Naive thymus-derived CD4-positive, alpha-beta T cell (primary cell): ENCODE measurements at regions of chr17 and their contacts with region 1.

Region 1: DNA sequence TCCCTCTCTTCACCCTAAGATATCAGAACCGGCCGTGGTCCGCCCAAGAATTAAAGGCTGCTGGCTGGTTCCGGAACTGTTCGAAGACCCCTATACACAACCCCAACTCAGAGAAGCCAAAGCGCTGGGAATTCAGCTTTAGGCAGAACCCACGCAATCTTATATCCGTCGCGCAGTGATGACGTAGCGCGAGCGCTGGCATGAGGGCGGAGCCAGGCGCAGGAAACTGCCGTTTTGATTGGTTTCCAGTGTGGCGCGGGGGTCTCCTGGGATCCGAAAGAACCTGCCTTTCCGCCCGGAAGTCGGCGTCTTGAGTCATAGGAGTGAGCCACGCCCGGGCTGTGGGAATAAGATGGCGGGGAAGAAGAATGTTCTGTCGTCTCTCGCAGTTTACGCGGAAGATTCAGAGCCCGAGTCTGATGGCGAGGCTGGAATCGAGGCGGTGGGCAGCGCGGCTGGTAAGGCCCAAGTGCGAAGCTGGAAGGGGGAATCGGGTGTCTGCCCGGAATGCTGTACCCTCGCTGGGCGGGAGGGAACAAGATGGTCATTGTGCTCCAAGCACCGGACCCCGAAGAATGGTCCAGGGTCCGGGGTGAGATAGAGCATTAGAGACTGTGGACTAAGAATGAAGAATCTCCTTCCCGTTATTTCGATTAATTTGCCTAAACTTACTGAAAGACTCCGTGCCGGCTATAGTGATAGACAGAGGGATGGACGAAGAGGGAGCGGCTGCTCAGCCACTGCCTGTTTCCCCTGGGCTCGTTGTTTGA is at the starts of genes RECQL5 and SAP30BP:
- DNase-seq: peak; percentile 94 to 98 (median 96)
- ATAC-seq: peak; percentile 100
- H3K4me3 ChIP-seq: peak within 1 kb of the TSS; percentile 99
- H3K4me3 Mint-ChIP-seq: peak within 1 kb of the TSS in 6 of 10 donors; percentile 59 to 74 (median 64)
- H3K27ac ChIP-seq: peak within 1 kb of the TSS; percentile 96
- H3K27ac Mint-ChIP-seq: peak within 1 kb of the TSS in 5 of 9 donors; percentile 6 to 83 (median 60)
- H3K4me1 ChIP-seq: peaks cover 21 to 26% of the 10 kb centered on the region in 2 donors
- H3K4me1 Mint-ChIP-seq: peaks cover 11 to 34% (median 21%) of the 10 kb centered on the region in 7 donors
- H3K27me3 ChIP-seq: no peaks in the 10 kb centered on the region
- H3K27me3 Mint-ChIP-seq: no peaks in the 10 kb centered on the region
- total RNA-seq, gene RECQL5: 38.7 to 76.5 (median 49.2) TPM
- total RNA-seq, gene SAP30BP: 97.6 to 198 (median 116) TPM

Region 2: GRCh38 chr17:75456417-75457046 is 210.7 kb before region 1 on chr17 and contains the start of gene TMEM94:
- CTCF ChIA-PET with region 1: no interaction called
- POLR2A ChIA-PET with region 1: interaction called, 3 read pairs
- intact Hi-C with region 1: loop called in 1 of 2 experiments (anchors 1 kb)
- DNase-seq: peak; percentile 70 to 93 (median 89)
- ATAC-seq: peak; percentile 98
- H3K4me3 ChIP-seq: peak within 1 kb of the TSS; percentile 99
- H3K4me3 Mint-ChIP-seq: peak within 1 kb of the TSS; percentile 92 to 99 (median 94)
- H3K27ac ChIP-seq: peak within 1 kb of the TSS; percentile 74
- H3K27ac Mint-ChIP-seq: peak within 1 kb of the TSS; percentile 84 to 99 (median 93)
- H3K4me1 ChIP-seq: peaks cover 10% of the 10 kb centered on the region in 2 donors
- H3K4me1 Mint-ChIP-seq: peaks cover 25 to 42% (median 34%) of the 10 kb centered on the region in 7 donors
- H3K27me3 ChIP-seq: no peaks in the 10 kb centered on the region
- H3K27me3 Mint-ChIP-seq: no peaks in the 10 kb centered on the region
- total RNA-seq, gene TMEM94: 74.1 to 97.2 (median 81.9) TPM

Region 3: DNA sequence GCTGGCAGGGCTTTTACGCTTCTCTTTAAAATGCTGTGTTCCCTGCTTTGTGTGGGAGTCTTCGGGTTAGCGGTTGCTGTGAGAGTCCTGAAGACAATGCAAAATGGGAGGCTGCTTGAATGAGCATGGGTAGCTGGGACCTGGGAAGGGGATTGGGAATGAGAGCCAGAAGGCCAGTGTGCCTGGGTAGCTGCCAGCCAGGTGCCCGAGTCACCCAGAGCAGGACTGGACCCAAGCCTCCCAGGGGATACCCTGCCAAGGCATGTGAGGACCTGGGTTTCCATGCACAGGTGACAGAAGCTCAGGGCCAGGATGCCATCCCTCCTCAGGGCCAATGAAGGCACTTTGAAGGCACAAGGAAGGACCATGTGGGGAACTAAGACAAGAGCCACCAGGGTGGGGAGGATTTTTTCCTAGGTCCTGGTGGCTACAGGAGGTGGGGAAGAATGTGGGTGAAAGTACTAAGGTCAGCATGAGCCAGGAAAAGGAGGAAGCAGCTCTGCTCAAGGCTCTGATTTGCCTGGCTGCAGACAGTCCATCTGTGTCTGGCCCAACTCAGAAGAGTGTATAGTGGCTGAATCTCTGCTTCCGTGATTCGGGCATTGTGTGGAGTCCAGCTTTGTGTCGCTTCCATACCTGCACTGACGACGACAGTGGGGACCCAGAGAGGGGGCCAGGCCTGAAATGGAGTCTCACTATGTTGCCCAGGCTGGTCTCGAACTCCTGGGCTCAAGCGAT is 190.3 kb before region 1 on chr17:
- CTCF ChIA-PET with region 1: no interaction called
- POLR2A ChIA-PET with region 1: no interaction called
- intact Hi-C with region 1: no loop called
- DNase-seq: no peak
- ATAC-seq: no peak
- H3K4me3 ChIP-seq: no peak overlapping the region
- H3K4me3 Mint-ChIP-seq: no peak overlapping the region
- H3K27ac ChIP-seq: no peak overlapping the region
- H3K27ac Mint-ChIP-seq: peak overlapping the region in 3 of 9 donors; percentile 38 to 86 (median 71)
- H3K4me1 ChIP-seq: no peaks in the 10 kb centered on the region
- H3K4me1 Mint-ChIP-seq: peaks cover 0 to 12% (median 5%) of the 10 kb centered on the region in 7 donors
- H3K27me3 ChIP-seq: no peaks in the 10 kb centered on the region
- H3K27me3 Mint-ChIP-seq: no peaks in the 10 kb centered on the region

Region 4: GRCh38 chr17:75515496-75516254 is 151.5 kb before region 1 on chr17 and contains the start of gene CASKIN2:
- CTCF ChIA-PET with region 1: no interaction called
- POLR2A ChIA-PET with region 1: no interaction called
- intact Hi-C with region 1: loop called in 1 of 2 experiments (anchors 5 kb)
- DNase-seq: peak; percentile 57 to 88 (median 70)
- ATAC-seq: peak; percentile 80
- H3K4me3 ChIP-seq: peak within 1 kb of the TSS; percentile 97
- H3K4me3 Mint-ChIP-seq: peak within 1 kb of the TSS; percentile 69 to 85 (median 78)
- H3K27ac ChIP-seq: no peak within 1 kb of the TSS
- H3K27ac Mint-ChIP-seq: peak within 1 kb of the TSS in 4 of 9 donors; percentile 36 to 63 (median 47)
- H3K4me1 ChIP-seq: peaks cover 23 to 25% of the 10 kb centered on the region in 2 donors
- H3K4me1 Mint-ChIP-seq: peaks cover 18 to 28% (median 22%) of the 10 kb centered on the region in 7 donors
- H3K27me3 ChIP-seq: no peaks in the 10 kb centered on the region
- H3K27me3 Mint-ChIP-seq: peaks cover 0 to 14% (median 0%) of the 10 kb centered on the region in 5 donors
- total RNA-seq, gene CASKIN2: 0.22 to 1.2 (median 0.92) TPM

Region 5: DNA sequence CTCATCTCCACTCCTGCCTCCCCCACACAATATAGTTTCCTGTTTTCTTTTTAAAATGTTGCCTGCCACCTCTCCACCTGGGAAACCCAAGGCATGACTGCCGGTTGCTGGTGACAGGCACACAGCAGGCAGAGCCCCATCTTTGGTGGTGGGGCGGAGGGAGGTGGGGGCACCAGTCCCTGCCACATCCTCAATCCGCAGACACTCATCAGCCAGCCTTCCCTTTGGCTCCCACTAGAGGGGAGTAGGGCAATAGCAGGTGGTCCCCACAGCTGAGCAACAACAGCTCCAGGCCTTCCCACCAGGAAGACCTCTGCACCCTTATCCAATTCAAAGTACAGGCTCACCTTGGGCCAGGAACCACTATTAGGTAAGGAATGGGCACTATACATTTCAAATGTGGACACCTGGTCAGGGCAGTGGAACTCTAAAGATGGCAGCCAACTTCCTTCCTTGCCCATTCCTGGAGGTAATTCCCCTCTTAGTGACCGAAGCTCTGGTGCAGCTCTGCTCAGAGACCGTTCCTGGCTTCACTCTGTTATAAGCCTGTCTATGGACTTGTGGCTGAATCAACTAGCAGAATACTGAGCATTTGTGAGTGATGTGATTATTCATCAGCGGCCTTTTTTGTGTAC is 14.2 kb before region 1 on chr17:
- CTCF ChIA-PET with region 1: interaction called, 5 read pairs
- POLR2A ChIA-PET with region 1: interaction called, 16 read pairs
- intact Hi-C with region 1: no loop called
- DNase-seq: peak in 5 of 9 donors; percentile 20 to 30 (median 28)
- ATAC-seq: peak; percentile 85
- H3K4me3 ChIP-seq: no peak overlapping the region
- H3K4me3 Mint-ChIP-seq: no peak overlapping the region
- H3K27ac ChIP-seq: no peak overlapping the region
- H3K27ac Mint-ChIP-seq: peak overlapping the region in 2 of 9 donors; percentile 38 to 51
- H3K4me1 ChIP-seq: no peaks in the 10 kb centered on the region
- H3K4me1 Mint-ChIP-seq: peaks cover 0 to 11% (median 4%) of the 10 kb centered on the region in 7 donors
- H3K27me3 ChIP-seq: no peaks in the 10 kb centered on the region
- H3K27me3 Mint-ChIP-seq: no peaks in the 10 kb centered on the region

Region 6: GRCh38 chr17:75729351-75729750 is 62.1 kb after region 1 on chr17:
- CTCF ChIA-PET with region 1: no interaction called
- POLR2A ChIA-PET with region 1: no interaction called
- intact Hi-C with region 1: no loop called
- DNase-seq: no peak
- ATAC-seq: no peak
- H3K4me3 ChIP-seq: no peak overlapping the region
- H3K4me3 Mint-ChIP-seq: no peak overlapping the region
- H3K27ac ChIP-seq: no peak overlapping the region
- H3K27ac Mint-ChIP-seq: no peak overlapping the region
- H3K4me1 ChIP-seq: no peaks in the 10 kb centered on the region
- H3K4me1 Mint-ChIP-seq: peaks cover 0 to under 1% (median 0%) of the 10 kb centered on the region in 7 donors
- H3K27me3 ChIP-seq: no peaks in the 10 kb centered on the region
- H3K27me3 Mint-ChIP-seq: no peaks in the 10 kb centered on the region

Region 7: GRCh38 chr17:75877752-75878173 is 210.6 kb after region 1 on chr17:
- CTCF ChIA-PET with region 1: no interaction called
- POLR2A ChIA-PET with region 1: no interaction called
- intact Hi-C with region 1: no loop called
- DNase-seq: peak; percentile 56 to 77 (median 69)
- ATAC-seq: peak; percentile 89
- H3K4me3 ChIP-seq: peak overlapping the region; percentile 74
- H3K4me3 Mint-ChIP-seq: peak overlapping the region; percentile 83 to 99 (median 90)
- H3K27ac ChIP-seq: peak overlapping the region; percentile 70
- H3K27ac Mint-ChIP-seq: peak overlapping the region; percentile 67 to 97 (median 89)
- H3K4me1 ChIP-seq: peaks cover 25 to 30% of the 10 kb centered on the region in 2 donors
- H3K4me1 Mint-ChIP-seq: peaks cover 28 to 57% (median 50%) of the 10 kb centered on the region in 7 donors
- H3K27me3 ChIP-seq: no peaks in the 10 kb centered on the region
- H3K27me3 Mint-ChIP-seq: peaks cover 0 to 28% (median 0%) of the 10 kb centered on the region in 5 donors

Region 8: DNA sequence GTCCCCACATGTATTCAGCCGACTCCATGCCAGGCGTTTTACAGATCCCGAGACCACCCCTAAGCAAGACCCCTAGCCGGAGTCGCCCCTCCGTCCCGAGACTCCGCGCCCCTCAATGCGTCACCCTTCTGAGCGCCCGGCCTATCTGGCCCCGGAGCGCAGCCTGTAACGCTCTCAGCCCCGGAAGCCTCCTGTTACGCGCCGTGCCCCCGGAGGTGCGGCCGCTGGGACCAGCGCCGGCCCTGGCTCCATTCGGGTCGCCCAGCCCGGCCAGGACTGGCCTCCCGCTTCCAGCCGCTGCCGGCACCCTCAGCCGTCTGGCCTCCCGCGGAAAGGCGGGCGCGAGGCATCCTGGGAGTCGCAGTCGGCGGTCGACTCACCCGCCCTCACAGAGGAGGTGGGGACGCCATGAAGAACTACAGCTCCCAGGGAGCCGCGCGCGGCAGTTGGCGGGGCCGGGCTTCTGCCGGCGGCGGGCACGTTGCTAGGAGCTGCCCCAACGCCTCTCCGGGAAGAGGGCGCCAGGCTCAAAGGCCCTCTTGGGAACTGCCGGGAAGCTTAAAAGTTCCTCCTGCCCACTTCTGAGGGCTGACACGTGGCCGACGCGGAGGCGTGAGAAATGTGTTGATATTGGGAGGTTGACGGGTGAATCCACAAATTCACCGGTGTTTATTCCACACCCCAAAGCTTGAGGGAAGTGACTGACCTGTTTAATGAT is 273.7 kb after region 1 on chr17 and contains the start of gene FBF1:
- CTCF ChIA-PET with region 1: no interaction called
- POLR2A ChIA-PET with region 1: no interaction called
- intact Hi-C with region 1: loop called in 1 of 2 experiments (anchors 1 kb)
- DNase-seq: peak; percentile 74 to 92 (median 82)
- ATAC-seq: peak; percentile 100
- H3K4me3 ChIP-seq: peak within 1 kb of the TSS; percentile 89
- H3K4me3 Mint-ChIP-seq: peak within 1 kb of the TSS; percentile 77 to 93 (median 90)
- H3K27ac ChIP-seq: peak within 1 kb of the TSS; percentile 86
- H3K27ac Mint-ChIP-seq: peak within 1 kb of the TSS; percentile 74 to 94 (median 89)
- H3K4me1 ChIP-seq: peaks cover 5 to 11% of the 10 kb centered on the region in 2 donors
- H3K4me1 Mint-ChIP-seq: peaks cover 9 to 19% (median 11%) of the 10 kb centered on the region in 7 donors
- H3K27me3 ChIP-seq: no peaks in the 10 kb centered on the region
- H3K27me3 Mint-ChIP-seq: no peaks in the 10 kb centered on the region
- total RNA-seq, gene FBF1: 19.9 to 48.1 (median 29.0) TPM